ENCODE measurements at regions of chr7 and their contacts with region 1.

Region 1: GRCh38 chr7:150778738-150779301 is 21.3 kb downstream of the TMEM176B start:
- DNase-seq: peak; percentile 87 to 93
- H3K4me3 ChIP-seq: no peak overlapping the region
- H3K27ac ChIP-seq: peak overlapping the region in 1 of 5 donors; percentile 43
- H3K4me1 ChIP-seq: peaks cover under 1 to 28% (median 15%) of the 10 kb centered on the region in 4 donors
- H3K27me3 ChIP-seq: no peaks in the 10 kb centered on the region
- CTCF ChIP-seq: peak in 5 of 7 experiments; percentile 74 to 91 (median 82)
- EP300 ChIP-seq: no peak
- POLR2A ChIP-seq: no peak

Region 2: GRCh38 chr7:150860291-150860977 is 81.6 kb after region 1 on chr7:
- intact Hi-C with region 1: loop called (anchors 10 kb)
- DNase-seq: peak in 1 of 2 donors; percentile 24
- H3K4me3 ChIP-seq: no peak overlapping the region
- H3K27ac ChIP-seq: no peak overlapping the region
- H3K4me1 ChIP-seq: no peaks in the 10 kb centered on the region
- H3K27me3 ChIP-seq: peaks cover 0 to 10% (median 0%) of the 10 kb centered on the region in 3 donors
- CTCF ChIP-seq: no peak
- EP300 ChIP-seq: no peak
- POLR2A ChIP-seq: no peak

Region 3: GRCh38 chr7:151327659-151328058 is 548.8 kb after region 1 on chr7:
- intact Hi-C with region 1: no loop called
- DNase-seq: no peak
- H3K4me3 ChIP-seq: no peak overlapping the region
- H3K27ac ChIP-seq: no peak overlapping the region
- H3K4me1 ChIP-seq: no peaks in the 10 kb centered on the region
- H3K27me3 ChIP-seq: no peaks in the 10 kb centered on the region
- CTCF ChIP-seq: no peak
- EP300 ChIP-seq: no peak
- POLR2A ChIP-seq: no peak